ENCODE measurements at regions of chr9 and their contacts with region 1.

Region 1: DNA sequence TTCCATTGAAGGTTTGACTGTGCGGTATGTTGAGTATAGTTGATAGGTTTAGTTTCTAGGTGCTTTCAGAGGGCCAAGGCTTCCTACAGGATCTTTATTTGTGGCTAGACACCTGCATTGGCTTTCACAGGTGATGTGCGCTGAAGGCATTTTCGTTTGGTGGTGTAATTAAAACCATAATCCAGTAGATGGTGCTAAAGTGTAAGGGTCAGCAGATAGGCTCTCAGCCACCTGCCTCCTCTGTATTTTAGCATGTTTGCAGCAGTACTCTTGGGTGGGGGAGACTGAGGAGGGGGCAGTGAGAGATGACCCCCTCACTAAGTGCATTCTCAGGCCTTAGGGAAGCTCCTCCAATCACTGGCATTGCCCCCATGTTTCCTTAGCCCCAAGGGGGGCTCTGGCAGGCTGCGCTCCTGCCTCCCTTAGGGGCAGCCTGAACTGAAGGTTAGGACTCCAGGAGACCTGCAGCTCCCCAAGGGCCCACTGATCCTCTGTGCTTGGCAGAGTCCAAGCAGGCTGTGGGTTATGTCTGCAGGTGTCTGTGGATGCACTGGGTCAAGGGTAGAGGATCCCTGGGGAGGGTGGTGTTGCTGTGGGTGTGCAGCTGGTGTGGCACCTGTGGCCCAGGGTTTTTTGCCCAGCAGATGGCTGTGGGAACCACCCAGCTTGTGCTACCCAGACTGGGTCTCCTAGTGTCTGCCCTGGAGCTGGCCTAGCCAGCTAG is 23.4 kb downstream of the CDK20 start:
- DNase-seq: no peak
- H3K4me3 Mint-ChIP-seq: no peak overlapping the region
- H3K27ac Mint-ChIP-seq: no peak overlapping the region
- H3K4me1 Mint-ChIP-seq: peaks cover 5% of the 10 kb centered on the region
- H3K27me3 Mint-ChIP-seq: peaks cover 28% of the 10 kb centered on the region

Region 2: DNA sequence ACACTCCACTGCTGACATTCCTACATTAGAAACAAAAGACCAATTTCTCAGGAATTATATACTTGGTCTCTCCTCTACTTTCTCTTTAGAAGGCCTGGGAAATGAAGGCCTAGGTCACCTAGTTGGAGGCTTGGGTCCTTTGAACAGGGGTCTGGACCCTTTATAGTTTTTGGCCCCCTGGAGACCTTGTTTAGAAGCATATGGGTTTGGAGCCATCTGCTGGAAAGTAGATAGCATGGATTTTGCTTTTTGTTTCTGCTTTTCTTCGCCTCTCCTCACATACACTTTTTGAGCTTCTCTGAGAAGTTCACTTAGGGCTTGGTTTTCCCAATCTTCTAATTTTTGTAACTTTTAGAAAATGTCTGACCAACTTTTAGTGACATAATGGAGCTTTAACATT is 90.5 kb after region 1 on chr9:
- CTCF ChIA-PET with region 1: interaction called, 10 read pairs
- POLR2A ChIA-PET with region 1: no interaction called
- intact Hi-C with region 1: no loop called
- DNase-seq: no peak
- H3K4me3 Mint-ChIP-seq: no peak overlapping the region
- H3K27ac Mint-ChIP-seq: no peak overlapping the region
- H3K4me1 Mint-ChIP-seq: no peaks in the 10 kb centered on the region
- H3K27me3 Mint-ChIP-seq: peaks cover 17% of the 10 kb centered on the region

Region 3: GRCh38 chr9:88173378-88173999 is 222.6 kb after region 1 on chr9:
- CTCF ChIA-PET with region 1: interaction called, 3 read pairs
- POLR2A ChIA-PET with region 1: no interaction called
- intact Hi-C with region 1: loop called (anchors 1 kb)
- DNase-seq: peak; percentile 58
- H3K4me3 Mint-ChIP-seq: no peak overlapping the region
- H3K27ac Mint-ChIP-seq: no peak overlapping the region
- H3K4me1 Mint-ChIP-seq: peaks cover under 1% of the 10 kb centered on the region
- H3K27me3 Mint-ChIP-seq: peaks cover 11% of the 10 kb centered on the region

Region 4: GRCh38 chr9:88578121-88579054 is 627.5 kb after region 1 on chr9:
- CTCF ChIA-PET with region 1: interaction called, 5 read pairs
- POLR2A ChIA-PET with region 1: no interaction called
- intact Hi-C with region 1: loop called (anchors 5 kb)
- DNase-seq: peak; percentile 76
- H3K4me3 Mint-ChIP-seq: peak overlapping the region; percentile 30
- H3K27ac Mint-ChIP-seq: no peak overlapping the region
- H3K4me1 Mint-ChIP-seq: peaks cover 3% of the 10 kb centered on the region
- H3K27me3 Mint-ChIP-seq: peaks cover 18% of the 10 kb centered on the region

Region 5: DNA sequence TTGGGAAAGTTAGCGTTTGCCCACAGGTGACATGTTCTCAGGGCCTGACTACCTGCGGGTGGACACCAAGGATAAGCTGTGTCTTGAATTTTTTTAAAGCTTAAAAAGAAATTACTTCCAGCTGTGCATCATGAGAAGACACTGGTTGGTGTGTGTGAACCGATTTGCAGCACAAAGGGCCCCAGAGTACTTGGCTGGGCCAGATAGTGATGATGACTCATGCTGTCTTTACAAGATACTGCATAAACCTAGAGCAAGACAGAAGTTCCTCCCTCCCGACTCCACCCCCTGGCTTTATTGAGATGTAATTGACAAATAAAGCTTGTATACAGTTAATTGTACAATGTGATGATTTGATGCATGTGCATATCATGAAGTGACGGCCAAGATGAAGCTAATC is 796.8 kb after region 1 on chr9:
- CTCF ChIA-PET with region 1: no interaction called
- POLR2A ChIA-PET with region 1: no interaction called
- intact Hi-C with region 1: loop called (anchors 10 kb)
- DNase-seq: no peak
- H3K4me3 Mint-ChIP-seq: no peak overlapping the region
- H3K27ac Mint-ChIP-seq: no peak overlapping the region
- H3K4me1 Mint-ChIP-seq: no peaks in the 10 kb centered on the region
- H3K27me3 Mint-ChIP-seq: peaks cover 15% of the 10 kb centered on the region